Activated naive CD4-positive, alpha-beta T cell treated with anti-CD3 and anti-CD28 coated beads for 36 hours (primary cell): ENCODE measurements at regions of chr4 and their contacts with region 1.

Region 1: GRCh38 chr4:80540785-80541469 is 205.4 kb downstream of the CFAP299 start:
- DNase-seq: no peak
- H3K4me3 Mint-ChIP-seq: no peak overlapping the region
- H3K27ac Mint-ChIP-seq: peak overlapping the region; percentile 41
- H3K4me1 Mint-ChIP-seq: peaks cover 48% of the 10 kb centered on the region
- H3K27me3 Mint-ChIP-seq: peaks cover 34% of the 10 kb centered on the region

Region 2: GRCh38 chr4:80393246-80393969 is 147.5 kb before region 1 on chr4:
- CTCF ChIA-PET with region 1: no interaction called
- intact Hi-C with region 1: loop called (anchors 1 kb)
- DNase-seq: peak; percentile 55
- H3K4me3 Mint-ChIP-seq: no peak overlapping the region
- H3K27ac Mint-ChIP-seq: peak overlapping the region; percentile 72
- H3K4me1 Mint-ChIP-seq: peaks cover 8% of the 10 kb centered on the region
- H3K27me3 Mint-ChIP-seq: no peaks in the 10 kb centered on the region

Region 3: GRCh38 chr4:80492761-80493160 is 48.2 kb before region 1 on chr4:
- CTCF ChIA-PET with region 1: no interaction called
- intact Hi-C with region 1: loop called (anchors 1 kb)
- DNase-seq: peak; percentile 44
- H3K4me3 Mint-ChIP-seq: no peak overlapping the region
- H3K27ac Mint-ChIP-seq: peak overlapping the region; percentile 57
- H3K4me1 Mint-ChIP-seq: peaks cover 46% of the 10 kb centered on the region
- H3K27me3 Mint-ChIP-seq: no peaks in the 10 kb centered on the region

Region 4: DNA sequence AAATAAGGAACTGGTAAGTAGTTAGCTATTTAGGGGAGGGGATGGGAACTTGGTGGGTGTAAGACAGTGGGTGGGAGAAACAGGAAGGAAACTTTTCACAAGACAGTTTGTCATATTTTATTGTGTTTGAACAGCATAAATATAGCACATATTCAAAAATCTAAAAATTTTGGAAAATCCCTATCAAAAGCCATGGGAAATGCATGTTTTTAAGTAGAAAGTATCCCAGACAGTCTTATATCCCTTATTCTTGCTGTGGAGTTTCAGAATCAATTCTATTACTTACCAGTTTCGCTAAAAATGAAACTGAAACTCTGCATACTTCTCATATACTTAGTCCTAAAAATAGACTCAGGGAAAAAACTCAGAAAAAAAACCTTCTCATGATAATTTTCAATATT is 953.1 kb after region 1 on chr4:
- CTCF ChIA-PET with region 1: no interaction called
- intact Hi-C with region 1: loop called (anchors 5 kb)
- DNase-seq: no peak
- H3K4me3 Mint-ChIP-seq: no peak overlapping the region
- H3K27ac Mint-ChIP-seq: peak overlapping the region; percentile 30
- H3K4me1 Mint-ChIP-seq: peaks cover 46% of the 10 kb centered on the region
- H3K27me3 Mint-ChIP-seq: no peaks in the 10 kb centered on the region